Activated B cell treated with CpG ODN at 0.5 μM for 24 hours (primary cell): ENCODE measurements at regions of chr5 and their contacts with region 1.

Region 1: DNA sequence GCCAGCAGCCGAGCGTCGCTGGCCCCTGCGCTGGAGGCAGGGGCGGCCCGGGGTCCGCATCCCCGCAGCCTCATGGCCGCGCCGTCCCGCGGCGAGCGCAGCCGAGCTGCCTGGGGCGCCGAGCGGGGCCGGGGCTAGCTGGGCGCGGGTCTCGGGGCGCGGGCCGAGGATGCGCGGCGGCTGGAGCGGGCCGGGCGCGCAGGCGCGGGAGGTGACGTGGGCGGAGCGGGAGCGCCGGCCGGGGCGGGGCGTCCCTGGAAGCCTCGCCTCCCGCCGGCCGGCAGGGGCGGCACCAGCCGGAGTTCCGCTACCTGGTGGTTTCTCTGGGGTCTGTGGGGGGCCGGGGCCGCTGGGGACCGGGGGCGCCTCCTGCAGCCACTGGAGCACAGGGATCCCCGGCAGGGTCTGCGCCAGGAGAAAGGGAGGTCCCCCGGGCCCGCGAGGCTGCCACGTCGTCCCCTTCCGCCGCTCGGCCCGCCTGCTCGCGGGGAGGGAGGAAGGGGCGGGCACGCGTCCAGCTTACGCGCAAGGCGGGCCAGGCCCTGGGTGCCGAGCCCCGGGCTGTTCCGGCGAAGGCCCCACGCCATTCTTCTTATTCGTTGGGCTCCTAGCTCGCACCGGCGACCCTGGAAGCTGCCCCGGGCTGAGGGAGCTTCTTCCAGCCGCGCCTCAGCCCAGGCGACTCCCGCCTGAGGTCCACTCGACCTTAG is at the start of gene LPCAT1:
- DNase-seq: peak; percentile 91
- ATAC-seq: peak; percentile 82
- H3K4me3 Mint-ChIP-seq: peak within 1 kb of the TSS; percentile 91
- H3K27ac Mint-ChIP-seq: peak within 1 kb of the TSS; percentile 87
- H3K4me1 Mint-ChIP-seq: peaks cover 57% of the 10 kb centered on the region
- H3K27me3 Mint-ChIP-seq: no peaks in the 10 kb centered on the region
- CTCF ChIP-seq: no peak
- total RNA-seq, gene LPCAT1: 246 and 269 TPM in 2 replicates

Region 2: DNA sequence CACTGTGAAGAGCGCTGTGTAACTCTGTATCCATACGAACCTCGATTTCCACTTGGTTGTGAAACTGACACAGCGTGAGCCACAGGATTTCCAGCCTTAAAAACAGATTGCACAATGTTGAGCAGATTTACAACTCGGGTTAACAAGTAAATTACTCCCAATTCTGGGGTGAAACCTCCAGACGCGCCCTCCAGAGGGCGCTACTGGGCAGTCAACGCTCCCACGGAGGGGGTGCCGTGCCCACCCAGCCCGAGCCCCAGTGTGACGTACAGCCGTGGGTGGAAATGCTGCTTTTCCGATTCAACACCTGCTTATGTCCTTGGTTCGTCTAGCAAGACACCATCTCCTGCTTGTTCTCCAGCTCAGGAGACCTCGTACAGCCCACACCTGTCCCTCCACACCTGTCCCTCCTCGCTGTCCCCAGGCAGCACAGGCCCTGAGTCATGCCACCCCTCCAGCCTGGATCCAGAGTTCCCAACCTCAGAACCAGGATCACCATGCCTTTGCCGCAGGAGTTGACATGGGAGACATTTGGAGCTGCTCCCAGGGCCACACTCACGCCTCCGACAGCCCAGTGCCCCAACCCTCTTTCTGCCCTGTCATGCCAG is 44.2 kb before region 1 on chr5:
- CTCF ChIA-PET with region 1: interaction called, 4 read pairs
- POLR2A ChIA-PET with region 1: interaction called, 68 read pairs
- intact Hi-C with region 1: no loop called
- DNase-seq: peak; percentile 68
- ATAC-seq: peak; percentile 53
- H3K4me3 Mint-ChIP-seq: peak overlapping the region; percentile 73
- H3K27ac Mint-ChIP-seq: peak overlapping the region; percentile 92
- H3K4me1 Mint-ChIP-seq: peaks cover 61% of the 10 kb centered on the region
- H3K27me3 Mint-ChIP-seq: no peaks in the 10 kb centered on the region
- CTCF ChIP-seq: no peak

Region 3: GRCh38 chr5:1494780-1495524 is 29.0 kb before region 1 on chr5:
- CTCF ChIA-PET with region 1: no interaction called
- POLR2A ChIA-PET with region 1: interaction called, 35 read pairs
- intact Hi-C with region 1: loop called (anchors 1 kb)
- DNase-seq: peak; percentile 78
- ATAC-seq: peak; percentile 59
- H3K4me3 Mint-ChIP-seq: peak overlapping the region; percentile 84
- H3K27ac Mint-ChIP-seq: peak overlapping the region; percentile 83
- H3K4me1 Mint-ChIP-seq: peaks cover 100% of the 10 kb centered on the region
- H3K27me3 Mint-ChIP-seq: no peaks in the 10 kb centered on the region
- CTCF ChIP-seq: no peak

Region 4: DNA sequence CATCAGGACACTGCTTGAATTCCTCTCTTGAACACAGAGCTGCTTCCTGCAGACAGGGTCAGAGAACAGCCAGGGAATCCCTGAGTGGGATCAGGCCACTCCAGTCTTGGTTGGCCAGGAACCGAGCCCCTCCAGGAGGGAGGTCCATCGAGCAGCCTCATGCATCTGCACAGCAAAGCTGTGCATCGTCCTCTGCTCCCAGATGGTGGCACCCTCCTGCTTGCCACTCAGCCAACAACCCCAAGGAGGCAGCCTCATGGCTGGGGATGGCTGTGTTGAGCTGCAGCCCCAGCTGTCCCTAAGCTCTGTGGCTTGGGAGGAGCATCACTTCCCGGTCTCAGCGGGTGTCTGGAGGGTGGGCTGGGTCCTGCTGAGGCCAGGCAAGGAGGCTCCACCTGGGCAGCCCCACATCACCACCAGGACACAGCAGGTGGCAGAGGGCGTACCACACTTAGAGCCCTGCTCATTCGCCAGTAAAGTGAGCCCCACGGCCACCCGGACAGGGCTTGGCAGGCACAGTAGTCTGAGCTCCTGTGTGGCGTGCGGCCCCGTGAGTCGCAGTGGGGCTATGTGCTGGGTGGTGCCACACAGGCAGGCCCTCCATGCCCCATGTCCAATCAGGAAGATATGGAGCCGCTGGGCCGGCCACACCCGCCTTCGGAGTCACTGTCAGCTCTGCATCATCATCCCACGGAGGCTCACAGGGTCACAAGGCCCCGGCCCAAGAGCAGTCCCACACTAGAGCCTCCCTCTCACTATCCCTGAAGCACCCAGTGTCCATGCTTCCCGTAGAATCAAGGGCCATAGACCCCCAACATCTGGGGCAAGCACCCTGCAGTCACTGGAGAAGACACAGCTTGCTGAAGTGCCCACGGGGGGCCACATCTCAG is 12.0 kb before region 1 on chr5:
- CTCF ChIA-PET with region 1: interaction called, 11 read pairs
- POLR2A ChIA-PET with region 1: interaction called, 24 read pairs
- intact Hi-C with region 1: no loop called
- DNase-seq: peak; percentile 15
- ATAC-seq: peak; percentile 63
- H3K4me3 Mint-ChIP-seq: no peak overlapping the region
- H3K27ac Mint-ChIP-seq: peak overlapping the region; percentile 12
- H3K4me1 Mint-ChIP-seq: peaks cover 51% of the 10 kb centered on the region
- H3K27me3 Mint-ChIP-seq: no peaks in the 10 kb centered on the region
- CTCF ChIP-seq: no peak

Region 5: GRCh38 chr5:1555011-1555807 is 31.3 kb after region 1 on chr5:
- CTCF ChIA-PET with region 1: no interaction called
- POLR2A ChIA-PET with region 1: no interaction called
- intact Hi-C with region 1: no loop called
- DNase-seq: no peak
- ATAC-seq: no peak
- H3K4me3 Mint-ChIP-seq: no peak overlapping the region
- H3K27ac Mint-ChIP-seq: no peak overlapping the region
- H3K4me1 Mint-ChIP-seq: no peaks in the 10 kb centered on the region
- H3K27me3 Mint-ChIP-seq: peaks cover 12% of the 10 kb centered on the region
- CTCF ChIP-seq: no peak

Region 6: GRCh38 chr5:2239201-2239910 is 715.4 kb after region 1 on chr5:
- CTCF ChIA-PET with region 1: no interaction called
- POLR2A ChIA-PET with region 1: no interaction called
- intact Hi-C with region 1: no loop called
- DNase-seq: no peak
- ATAC-seq: no peak
- H3K4me3 Mint-ChIP-seq: no peak overlapping the region
- H3K27ac Mint-ChIP-seq: no peak overlapping the region
- H3K4me1 Mint-ChIP-seq: no peaks in the 10 kb centered on the region
- H3K27me3 Mint-ChIP-seq: no peaks in the 10 kb centered on the region
- CTCF ChIP-seq: no peak